Posterior cingulate gyrus (tissue), 11 donors: ENCODE measurements at regions of chr12 and their contacts with region 1.

Region 1: GRCh38 chr12:96399919-96400797 is at the start of gene CDK17:
- DNase-seq: peak; percentile 72 to 96 (median 82)

Region 2: GRCh38 chr12:96035278-96036236 is 364.6 kb before region 1 on chr12 and contains the start of gene LTA4H:
- intact Hi-C with region 1: loop called (anchors 10 kb)
- DNase-seq: peak; percentile 94 to 99 (median 96)

Region 3: DNA sequence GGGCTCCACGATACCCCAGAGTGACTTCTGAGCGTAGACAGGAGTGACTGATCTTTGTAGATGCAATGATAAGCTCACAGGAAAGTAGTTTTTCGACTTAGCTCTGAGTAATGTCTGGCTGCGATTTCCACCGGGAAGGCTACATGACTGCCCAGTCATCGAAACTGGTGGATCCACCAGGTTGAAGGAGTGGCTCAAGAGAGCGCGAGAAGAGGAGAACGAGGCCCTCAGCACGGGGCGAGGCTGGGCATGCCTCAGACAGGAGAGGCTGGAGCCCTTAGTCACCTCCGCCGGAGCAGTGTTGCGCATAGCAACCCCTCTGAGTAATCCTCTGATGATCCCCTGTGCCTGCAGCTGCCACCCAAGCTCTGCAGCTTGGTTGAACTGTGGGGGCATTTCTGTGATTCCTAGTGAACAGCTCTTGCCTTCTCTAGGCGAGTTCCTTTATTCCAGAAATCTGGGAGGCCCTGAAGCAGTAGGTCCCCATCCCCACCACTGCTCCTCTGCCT is 180.4 kb before region 1 on chr12:
- intact Hi-C with region 1: loop called (anchors 2 kb)
- DNase-seq: no peak

Region 4: GRCh38 chr12:96300064-96300463 is 100.1 kb before region 1 on chr12:
- intact Hi-C with region 1: loop called (anchors 2 kb)
- DNase-seq: no peak

Region 5: DNA sequence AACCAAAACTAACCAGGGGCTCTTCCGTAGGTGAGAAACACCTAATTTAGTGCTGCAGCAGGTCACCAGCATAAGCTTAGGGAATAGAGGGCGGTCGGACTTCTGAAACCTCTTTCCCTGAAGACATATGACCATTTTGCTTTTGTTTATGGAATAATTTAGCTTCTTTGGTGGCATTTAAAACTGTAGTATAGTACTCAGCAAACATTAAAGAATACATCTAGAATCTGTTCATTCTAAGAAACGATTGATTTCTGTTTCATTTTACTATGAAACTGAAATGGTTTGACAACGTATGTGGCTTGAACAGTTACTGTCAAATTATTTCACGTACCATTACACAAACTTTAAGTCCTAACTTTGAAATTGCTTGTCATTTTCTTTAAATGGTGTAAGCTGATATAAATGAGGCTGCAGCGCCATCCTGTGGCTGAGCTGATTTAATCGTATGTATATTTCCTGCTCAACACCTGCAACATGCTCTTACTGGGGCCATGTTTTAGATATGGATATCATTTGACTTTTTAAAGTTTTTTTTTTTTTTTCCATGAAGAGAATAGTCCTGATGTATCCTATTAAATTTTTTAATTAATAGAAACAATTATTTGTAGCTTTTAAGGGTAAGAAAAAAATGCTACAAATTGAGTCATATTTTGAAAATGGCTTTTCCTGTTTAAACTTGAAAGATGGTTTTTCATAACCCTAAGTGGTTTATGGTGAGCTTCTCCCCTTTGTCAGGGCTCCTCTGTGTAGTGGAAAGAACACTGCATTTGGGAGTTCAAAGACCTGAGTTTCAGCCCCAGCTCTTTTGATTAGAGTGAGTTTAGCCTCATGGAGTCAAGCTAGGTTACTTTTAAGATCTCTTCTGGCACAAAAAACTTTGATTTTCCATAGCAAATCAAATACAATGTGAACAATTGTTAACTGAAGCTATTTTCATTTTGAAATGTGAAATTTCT is 116.6 kb after region 1 on chr12:
- intact Hi-C with region 1: loop called (anchors 10 kb)
- DNase-seq: peak; percentile 45 to 94 (median 76)